Activated CD8-positive, alpha-beta memory T cell treated with anti-CD3 and anti-CD28 coated beads, Interleukin-2, amount 10 ng/mL, durations not matched to agents 7 days and 5 days (primary cell): ENCODE measurements at regions of chr13 and their contacts with region 1.

Region 1: GRCh38 chr13:52652196-52652979 is at the start of gene SUGT1:
- DNase-seq: peak; percentile 98
- ATAC-seq: peak; percentile 95
- H3K4me3 Mint-ChIP-seq: no peak within 1 kb of the TSS
- H3K27ac Mint-ChIP-seq: no peak within 1 kb of the TSS
- H3K4me1 Mint-ChIP-seq: peaks cover 7% of the 10 kb centered on the region
- H3K27me3 Mint-ChIP-seq: no peaks in the 10 kb centered on the region
- total RNA-seq, gene SUGT1: 42.8 to 51.8 TPM

Region 2: GRCh38 chr13:52617070-52618060 is 35.0 kb before region 1 on chr13:
- CTCF ChIA-PET with region 1: interaction called, 23 read pairs
- DNase-seq: peak; percentile 92
- ATAC-seq: peak; percentile 96
- H3K4me3 Mint-ChIP-seq: peak overlapping the region; percentile 99
- H3K27ac Mint-ChIP-seq: peak overlapping the region; percentile 95
- H3K4me1 Mint-ChIP-seq: peaks cover 26% of the 10 kb centered on the region
- H3K27me3 Mint-ChIP-seq: peaks cover 2% of the 10 kb centered on the region

Region 3: GRCh38 chr13:53079691-53080090 is 427.3 kb after region 1 on chr13:
- CTCF ChIA-PET with region 1: no interaction called
- DNase-seq: no peak
- ATAC-seq: no peak
- H3K4me3 Mint-ChIP-seq: no peak overlapping the region
- H3K27ac Mint-ChIP-seq: no peak overlapping the region
- H3K4me1 Mint-ChIP-seq: no peaks in the 10 kb centered on the region
- H3K27me3 Mint-ChIP-seq: no peaks in the 10 kb centered on the region